Activated naive CD4-positive, alpha-beta T cell treated with anti-CD3 and anti-CD28 coated beads for 36 hours (primary cell): ENCODE measurements at regions of chr2 and their contacts with region 1.

Region 1: GRCh38 chr2:225041851-225042799 is at the start of gene DOCK10:
- DNase-seq: peak; percentile 60
- H3K4me3 Mint-ChIP-seq: peak within 1 kb of the TSS; percentile 85
- H3K27ac Mint-ChIP-seq: peak within 1 kb of the TSS; percentile 96
- H3K4me1 Mint-ChIP-seq: peaks cover 39% of the 10 kb centered on the region
- H3K27me3 Mint-ChIP-seq: no peaks in the 10 kb centered on the region
- total RNA-seq, gene DOCK10: 123 to 137 TPM

Region 2: GRCh38 chr2:224585205-224586088 is 456.7 kb before region 1 on chr2 and contains the start of gene CUL3:
- CTCF ChIA-PET with region 1: no interaction called
- intact Hi-C with region 1: loop called (anchors 5 kb)
- DNase-seq: peak; percentile 100
- H3K4me3 Mint-ChIP-seq: peak within 1 kb of the TSS; percentile 92
- H3K27ac Mint-ChIP-seq: peak within 1 kb of the TSS; percentile 89
- H3K4me1 Mint-ChIP-seq: peaks cover 31% of the 10 kb centered on the region
- H3K27me3 Mint-ChIP-seq: no peaks in the 10 kb centered on the region
- total RNA-seq, gene CUL3: 61.7 to 66.0 TPM

Region 3: DNA sequence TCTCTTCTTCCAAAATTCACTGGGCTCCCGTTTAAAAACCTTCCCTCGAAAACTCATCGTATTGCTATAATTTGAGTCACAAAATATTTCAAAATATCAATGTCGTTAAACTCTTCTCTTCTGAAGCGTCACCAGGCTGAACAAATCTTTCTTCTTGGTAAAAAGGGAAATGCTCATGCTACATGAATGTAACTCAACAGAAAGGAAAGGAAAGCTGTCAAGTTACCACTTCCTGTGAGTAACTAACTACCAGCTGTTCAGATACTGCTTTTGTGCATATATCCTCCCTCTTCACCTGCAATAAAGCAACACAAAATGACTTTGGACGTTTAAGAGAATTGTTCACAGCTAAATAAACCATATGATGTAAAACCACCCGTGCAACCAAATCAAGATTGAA is 95.2 kb before region 1 on chr2:
- CTCF ChIA-PET with region 1: interaction called, 3 read pairs
- intact Hi-C with region 1: loop called (anchors 1 kb)
- DNase-seq: no peak
- H3K4me3 Mint-ChIP-seq: peak overlapping the region; percentile 82
- H3K27ac Mint-ChIP-seq: peak overlapping the region; percentile 94
- H3K4me1 Mint-ChIP-seq: peaks cover 58% of the 10 kb centered on the region
- H3K27me3 Mint-ChIP-seq: no peaks in the 10 kb centered on the region

Region 4: GRCh38 chr2:225025917-225026571 is 16.1 kb before region 1 on chr2:
- CTCF ChIA-PET with region 1: interaction called, 9 read pairs
- intact Hi-C with region 1: loop called (anchors 1 kb)
- DNase-seq: no peak
- H3K4me3 Mint-ChIP-seq: no peak overlapping the region
- H3K27ac Mint-ChIP-seq: peak overlapping the region; percentile 37
- H3K4me1 Mint-ChIP-seq: peaks cover 86% of the 10 kb centered on the region
- H3K27me3 Mint-ChIP-seq: no peaks in the 10 kb centered on the region

Region 5: GRCh38 chr2:225064362-225064761 is 22.2 kb after region 1 on chr2:
- CTCF ChIA-PET with region 1: interaction called, 4 read pairs
- intact Hi-C with region 1: loop called (anchors 1 kb)
- DNase-seq: no peak
- H3K4me3 Mint-ChIP-seq: no peak overlapping the region
- H3K27ac Mint-ChIP-seq: no peak overlapping the region
- H3K4me1 Mint-ChIP-seq: peaks cover 45% of the 10 kb centered on the region
- H3K27me3 Mint-ChIP-seq: no peaks in the 10 kb centered on the region

Region 6: GRCh38 chr2:225971433-225971832 is 929.3 kb after region 1 on chr2:
- CTCF ChIA-PET with region 1: no interaction called
- intact Hi-C with region 1: no loop called
- DNase-seq: no peak
- H3K4me3 Mint-ChIP-seq: no peak overlapping the region
- H3K27ac Mint-ChIP-seq: no peak overlapping the region
- H3K4me1 Mint-ChIP-seq: no peaks in the 10 kb centered on the region
- H3K27me3 Mint-ChIP-seq: no peaks in the 10 kb centered on the region